ENCODE measurements at regions of chr10 and their contacts with region 1.

Region 1: DNA sequence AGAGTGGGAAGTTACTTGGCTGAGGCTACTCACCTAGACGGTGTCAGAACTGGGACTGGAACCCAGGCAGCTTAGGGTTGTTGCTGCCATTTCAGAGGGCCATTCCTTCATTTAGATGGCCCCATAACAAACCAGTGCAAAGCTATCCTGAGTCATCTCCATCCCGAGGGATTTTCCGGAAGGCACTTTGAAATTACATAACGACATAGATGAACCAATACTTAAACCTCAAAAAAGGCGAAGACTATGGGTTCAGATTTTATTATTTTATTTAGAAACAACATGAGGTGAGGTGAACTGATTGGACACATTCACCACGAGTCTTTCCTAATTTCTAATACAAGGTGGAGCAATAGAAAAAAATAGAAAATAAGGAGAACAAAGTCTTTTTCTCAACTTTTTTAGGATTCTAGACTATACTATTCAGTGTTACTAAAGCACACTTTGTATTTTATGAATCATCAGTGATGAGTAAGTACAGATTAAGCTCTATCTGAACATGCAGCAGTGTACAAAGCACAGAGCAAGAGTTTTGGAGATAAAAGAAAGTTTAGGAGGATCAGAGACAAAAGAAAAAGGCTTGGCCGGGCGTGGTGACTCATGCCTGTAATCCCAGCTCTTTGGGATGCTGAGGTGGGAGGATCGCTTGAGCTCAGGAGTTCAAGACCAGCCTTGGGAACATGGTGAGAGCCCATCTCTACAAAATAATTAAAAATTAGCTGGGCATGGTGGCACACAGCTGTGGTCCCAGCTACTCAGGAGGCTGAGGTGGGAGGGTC is 79.5 kb upstream of the SVIL start:
- DNase-seq: no peak
- H3K4me3 ChIP-seq: no peak overlapping the region
- H3K27ac ChIP-seq: peak overlapping the region in 2 of 4 donors; percentile 26 to 29
- H3K4me1 ChIP-seq: peaks cover 0 to 27% (median 24%) of the 10 kb centered on the region in 4 donors
- H3K27me3 ChIP-seq: no peaks in the 10 kb centered on the region
- CTCF ChIP-seq: no peak
- EP300 ChIP-seq: no peak
- POLR2A ChIP-seq: no peak

Region 2: GRCh38 chr10:29243750-29244149 is 470.5 kb before region 1 on chr10:
- in situ Hi-C with region 1: no loop called
- intact Hi-C with region 1: no loop called
- DNase-seq: no peak
- H3K4me3 ChIP-seq: no peak overlapping the region
- H3K27ac ChIP-seq: no peak overlapping the region
- H3K4me1 ChIP-seq: no peaks in the 10 kb centered on the region
- H3K27me3 ChIP-seq: no peaks in the 10 kb centered on the region
- CTCF ChIP-seq: no peak
- EP300 ChIP-seq: no peak
- POLR2A ChIP-seq: no peak

Region 3: GRCh38 chr10:29648114-29648982 is 65.9 kb before region 1 on chr10:
- in situ Hi-C with region 1: no loop called
- intact Hi-C with region 1: loop called (anchors 1 kb)
- DNase-seq: peak; percentile 47
- H3K4me3 ChIP-seq: peak overlapping the region in 2 of 4 donors; percentile 0 to 28
- H3K27ac ChIP-seq: peak overlapping the region; percentile 83 to 86 (median 84)
- H3K4me1 ChIP-seq: peaks cover 38 to 68% (median 48%) of the 10 kb centered on the region in 4 donors
- H3K27me3 ChIP-seq: no peaks in the 10 kb centered on the region
- CTCF ChIP-seq: peak in 1 of 5 experiments; percentile 17
- EP300 ChIP-seq: no peak
- POLR2A ChIP-seq: no peak

Region 4: GRCh38 chr10:29669149-29669548 is 45.1 kb before region 1 on chr10:
- in situ Hi-C with region 1: no loop called
- intact Hi-C with region 1: no loop called
- DNase-seq: no peak
- H3K4me3 ChIP-seq: no peak overlapping the region
- H3K27ac ChIP-seq: peak overlapping the region in 2 of 4 donors; percentile 26 to 32
- H3K4me1 ChIP-seq: peaks cover 0 to 37% (median 9%) of the 10 kb centered on the region in 4 donors
- H3K27me3 ChIP-seq: no peaks in the 10 kb centered on the region
- CTCF ChIP-seq: no peak
- EP300 ChIP-seq: no peak
- POLR2A ChIP-seq: no peak

Region 5: DNA sequence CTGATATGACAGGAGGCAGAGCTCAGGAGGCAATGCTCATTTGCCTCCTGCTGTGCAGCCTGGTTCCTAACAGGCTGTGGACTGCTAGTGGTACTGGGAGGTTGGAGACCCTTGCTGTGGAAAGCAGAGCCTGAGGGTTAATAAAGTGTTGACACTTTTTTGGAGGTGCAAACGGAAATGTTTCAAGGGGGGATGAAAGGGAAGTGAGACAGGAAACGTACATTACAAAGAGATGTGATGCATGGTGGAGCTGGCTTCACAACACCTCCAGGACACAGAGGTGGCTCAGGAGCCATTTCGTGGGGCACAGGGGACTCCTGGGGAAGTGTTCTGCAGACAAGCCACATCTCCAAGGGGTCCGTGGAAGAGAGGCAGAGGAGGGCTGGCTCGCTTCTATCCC is 58.1 kb after region 1 on chr10:
- in situ Hi-C with region 1: no loop called
- intact Hi-C with region 1: no loop called
- DNase-seq: no peak
- H3K4me3 ChIP-seq: no peak overlapping the region
- H3K27ac ChIP-seq: peak overlapping the region in 2 of 4 donors; percentile 58 to 78
- H3K4me1 ChIP-seq: no peaks in the 10 kb centered on the region
- H3K27me3 ChIP-seq: no peaks in the 10 kb centered on the region
- CTCF ChIP-seq: no peak
- EP300 ChIP-seq: no peak
- POLR2A ChIP-seq: no peak

Region 6: DNA sequence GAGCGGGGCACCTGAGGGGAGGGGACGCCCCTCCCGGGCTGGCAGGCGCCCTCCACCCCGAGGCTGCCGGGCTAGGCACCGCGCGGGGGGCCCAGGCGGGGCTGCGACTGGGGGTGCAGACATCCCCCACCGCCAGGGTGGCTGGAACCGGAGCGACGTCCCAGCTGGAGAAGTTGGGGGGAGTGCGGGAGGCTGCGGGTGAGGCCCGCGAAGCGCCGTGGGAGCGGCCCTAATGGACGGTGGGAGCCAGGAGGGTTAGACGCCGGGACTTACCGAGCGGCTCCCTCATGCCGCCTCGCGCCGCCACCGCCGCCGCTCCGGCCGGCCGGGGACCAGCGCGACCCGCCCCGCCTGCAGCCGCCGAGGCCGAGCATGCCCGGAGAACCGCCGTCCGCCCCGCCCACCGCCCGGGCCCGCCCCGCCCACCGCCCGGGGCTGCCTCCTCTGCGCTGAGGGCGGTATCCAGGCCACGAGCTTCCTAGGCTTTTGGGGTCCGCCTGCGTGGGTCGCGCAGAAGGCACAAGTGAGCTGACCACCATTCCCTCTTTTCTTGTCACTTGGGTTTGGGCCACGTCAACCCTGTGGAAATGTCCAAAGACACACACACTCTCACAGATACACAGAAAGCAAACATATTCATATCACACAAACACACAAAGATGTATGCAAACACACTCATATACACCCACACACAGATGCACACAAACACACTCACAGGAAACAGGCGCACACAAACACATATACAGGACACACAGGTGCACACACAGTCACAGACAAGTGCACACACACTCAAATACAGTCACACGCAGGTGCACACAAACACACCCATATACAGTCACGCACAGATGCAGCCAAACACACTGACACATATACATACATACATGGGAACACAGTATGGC is 345.2 kb after region 1 on chr10 and contains the start of gene JCAD:
- in situ Hi-C with region 1: no loop called
- intact Hi-C with region 1: no loop called
- DNase-seq: peak; percentile 73
- H3K4me3 ChIP-seq: peak within 1 kb of the TSS; percentile 61 to 68 (median 66)
- H3K27ac ChIP-seq: peak within 1 kb of the TSS; percentile 80 to 91 (median 85)
- H3K4me1 ChIP-seq: peaks cover 2 to 16% (median 8%) of the 10 kb centered on the region in 4 donors
- H3K27me3 ChIP-seq: peaks cover 35% of the 10 kb centered on the region
- CTCF ChIP-seq: no peak
- EP300 ChIP-seq: no peak
- POLR2A ChIP-seq: no peak
- total RNA-seq, gene JCAD: 13.0 to 40.8 (median 19.9) TPM